Mucosa of descending colon (tissue), 3 donors: ENCODE measurements at regions of chrX and their contacts with region 1.

Region 1: DNA sequence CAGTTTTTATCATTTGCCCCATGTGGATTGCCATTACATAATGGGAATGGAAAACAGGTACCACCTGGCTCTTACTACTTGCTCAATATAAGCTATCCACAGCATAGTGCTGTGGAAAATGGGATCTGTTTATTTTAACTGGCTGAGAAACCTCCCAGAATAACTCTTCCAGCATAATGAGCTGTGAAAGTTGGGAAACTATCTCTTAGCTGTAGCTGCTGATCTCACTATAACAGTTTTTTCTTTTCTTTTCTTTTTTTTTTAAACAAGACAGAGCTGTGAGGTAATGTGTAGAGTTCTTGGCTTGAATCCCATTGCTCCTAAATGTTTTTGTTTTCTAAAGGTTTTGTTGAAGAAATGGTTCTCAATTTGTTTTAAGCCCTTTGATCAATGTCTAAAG is 988.3 kb downstream of the PCDH19 start:
- DNase-seq: no peak
- ATAC-seq: no peak
- H3K4me3 ChIP-seq: no peak overlapping the region
- H3K4me1 ChIP-seq: no peaks in the 10 kb centered on the region
- CTCF ChIP-seq: no peak

Region 2: DNA sequence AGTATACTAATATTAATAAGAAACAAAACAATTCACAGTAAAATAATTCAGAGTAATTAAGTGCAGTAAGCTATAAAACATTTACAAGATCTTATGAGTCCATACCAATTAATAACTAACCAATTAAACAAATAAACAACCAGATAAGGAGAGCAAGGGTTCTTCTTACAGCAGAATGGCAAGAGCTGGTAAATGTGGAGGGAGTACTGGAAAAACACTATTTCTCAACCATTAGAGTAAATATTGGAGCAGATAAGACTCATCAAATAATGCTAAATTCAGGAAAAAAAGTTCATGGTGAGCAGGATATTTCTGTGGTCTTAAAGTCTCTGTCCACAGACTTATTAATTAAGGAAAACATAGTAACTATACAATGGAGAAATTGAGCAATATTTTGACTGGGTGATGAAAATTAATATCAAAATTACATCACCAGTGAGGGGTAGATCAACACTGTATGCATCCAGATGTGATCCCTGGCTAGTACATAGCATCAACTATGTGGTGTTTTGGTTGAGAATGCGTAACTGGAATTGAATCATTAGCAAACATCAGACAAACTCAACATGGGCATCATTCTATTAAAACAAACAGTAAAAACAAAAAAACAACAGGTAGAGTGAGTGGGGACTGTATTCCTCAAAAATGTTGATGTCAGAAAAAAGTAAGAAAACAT is 388.4 kb before region 1 on chrX:
- intact Hi-C with region 1: no loop called
- DNase-seq: no peak
- ATAC-seq: no peak
- H3K4me3 ChIP-seq: no peak overlapping the region
- H3K4me1 ChIP-seq: no peaks in the 10 kb centered on the region
- CTCF ChIP-seq: no peak

Region 3: GRCh38 chrX:99507768-99508167 is 86.0 kb after region 1 on chrX:
- intact Hi-C with region 1: loop called in 1 of 2 experiments (anchors 10 kb)
- DNase-seq: no peak
- ATAC-seq: no peak
- H3K4me3 ChIP-seq: no peak overlapping the region
- H3K4me1 ChIP-seq: no peaks in the 10 kb centered on the region
- CTCF ChIP-seq: no peak

Region 4: GRCh38 chrX:99572711-99573110 is 150.9 kb after region 1 on chrX:
- intact Hi-C with region 1: no loop called
- DNase-seq: no peak
- ATAC-seq: no peak
- H3K4me3 ChIP-seq: no peak overlapping the region
- H3K4me1 ChIP-seq: no peaks in the 10 kb centered on the region
- CTCF ChIP-seq: no peak

Region 5: DNA sequence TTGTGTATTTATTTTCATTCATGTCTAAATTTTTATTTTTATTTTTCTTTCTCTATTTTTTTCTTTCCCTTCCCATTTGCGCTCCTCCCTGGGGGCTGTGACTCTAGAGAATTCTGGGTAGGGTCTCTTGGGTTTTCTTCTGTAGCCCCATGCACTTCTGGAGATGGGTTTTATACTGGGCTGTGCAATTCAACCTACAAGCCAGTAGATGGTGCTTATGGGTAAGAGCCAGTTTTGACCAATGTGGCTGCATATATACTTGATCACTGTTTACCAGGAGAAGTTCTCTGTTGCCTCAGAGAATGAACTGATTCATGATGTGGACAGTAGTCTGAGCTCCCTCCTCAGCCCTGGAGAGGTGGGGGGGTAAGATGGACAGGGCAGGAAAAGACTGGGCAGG is 373.7 kb after region 1 on chrX:
- intact Hi-C with region 1: no loop called
- DNase-seq: no peak
- ATAC-seq: no peak
- H3K4me3 ChIP-seq: no peak overlapping the region
- H3K4me1 ChIP-seq: no peaks in the 10 kb centered on the region
- CTCF ChIP-seq: no peak